Activated naive CD4-positive, alpha-beta T cell treated with anti-CD3 and anti-CD28 coated beads, Interleukin-2, amount 10 ng/mL, durations not matched to agents 7 days and 5 days (primary cell): ENCODE measurements at regions of chr4 and their contacts with region 1.

Region 1: DNA sequence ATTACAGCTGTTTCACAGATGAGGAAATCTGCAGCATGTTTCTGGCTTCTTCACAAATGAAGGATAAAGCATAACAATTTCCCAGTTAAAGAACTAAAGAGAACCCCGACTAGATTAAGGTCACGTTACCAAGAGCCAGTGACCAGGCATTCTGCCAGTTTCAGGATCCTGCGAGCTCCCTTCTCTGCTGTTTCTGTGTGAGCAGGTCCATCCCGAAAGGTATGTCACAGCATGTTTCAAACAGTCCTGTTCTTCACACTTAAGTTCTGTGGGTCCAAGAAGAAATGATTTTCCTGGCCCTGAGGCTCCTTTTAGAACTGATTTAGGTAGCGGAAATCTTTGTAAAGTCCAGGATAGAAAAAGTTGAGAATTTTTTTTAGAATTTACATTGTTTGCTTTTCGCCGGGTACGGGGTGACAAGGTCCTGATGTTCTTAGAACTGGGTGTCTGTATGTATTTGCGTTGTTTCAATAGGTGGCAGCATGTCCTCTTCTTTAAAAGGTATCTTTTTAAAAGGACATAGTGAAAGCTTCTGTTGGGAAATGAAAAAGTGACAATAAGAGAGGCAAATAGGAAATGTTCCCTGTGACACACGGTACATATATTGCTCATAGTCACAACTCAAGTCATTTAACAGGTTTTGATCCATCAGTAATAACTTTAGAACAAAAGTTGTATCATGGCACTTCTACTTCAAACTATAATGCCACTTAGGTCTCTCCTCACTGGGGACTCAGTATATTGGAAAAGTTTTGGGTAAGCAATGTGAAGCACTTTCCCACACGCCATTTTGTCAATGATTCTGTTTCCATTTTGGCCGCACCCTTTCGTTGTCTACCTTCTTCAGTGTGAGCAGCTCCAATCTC is 18.4 kb downstream of the IL21 start:
- DNase-seq: no peak
- H3K4me3 Mint-ChIP-seq: no peak overlapping the region
- H3K27ac Mint-ChIP-seq: no peak overlapping the region
- H3K4me1 Mint-ChIP-seq: peaks cover 12% of the 10 kb centered on the region
- H3K27me3 Mint-ChIP-seq: no peaks in the 10 kb centered on the region

Region 2: DNA sequence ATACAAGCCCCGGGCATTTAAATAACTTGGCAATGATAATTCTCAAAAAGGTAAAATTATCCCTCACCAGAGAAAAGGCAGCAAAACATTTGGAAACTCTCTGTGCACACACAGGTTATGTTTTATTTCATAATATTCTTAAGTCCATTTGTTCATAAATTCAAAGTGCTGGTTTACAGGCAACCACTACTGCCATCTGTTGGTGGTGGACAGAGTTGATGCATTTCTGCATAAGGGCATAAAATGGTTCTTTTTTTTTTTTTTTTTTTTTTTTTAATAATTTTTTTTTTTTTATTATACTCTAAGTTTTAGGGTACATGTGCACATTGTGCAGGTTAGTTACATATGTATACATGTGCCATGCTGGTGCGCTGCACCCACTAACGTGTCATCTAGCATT is 49.9 kb after region 1 on chr4:
- CTCF ChIA-PET with region 1: interaction called, 25 read pairs
- DNase-seq: peak; percentile 66
- H3K4me3 Mint-ChIP-seq: no peak overlapping the region
- H3K27ac Mint-ChIP-seq: no peak overlapping the region
- H3K4me1 Mint-ChIP-seq: peaks cover 4% of the 10 kb centered on the region
- H3K27me3 Mint-ChIP-seq: no peaks in the 10 kb centered on the region

Region 3: DNA sequence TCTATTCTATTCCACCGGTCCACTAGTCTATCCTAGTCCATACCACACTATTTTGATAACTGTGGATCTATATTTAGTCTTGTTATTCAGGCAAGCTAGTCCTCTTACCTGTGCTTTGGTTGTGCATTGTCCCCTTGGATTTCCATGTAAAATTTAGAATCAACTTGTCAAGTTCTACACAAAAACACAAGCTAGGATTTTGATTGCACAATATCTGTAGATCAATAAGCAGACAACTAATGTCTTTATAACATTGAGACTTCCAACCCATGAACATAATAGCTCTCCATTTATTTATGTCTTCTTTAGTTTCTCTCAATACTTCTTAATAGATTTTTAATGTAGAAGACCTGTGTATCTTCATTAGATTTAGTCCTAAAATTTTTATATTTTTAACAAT is 119.7 kb after region 1 on chr4:
- CTCF ChIA-PET with region 1: interaction called, 92 read pairs
- DNase-seq: no peak
- H3K4me3 Mint-ChIP-seq: no peak overlapping the region
- H3K27ac Mint-ChIP-seq: no peak overlapping the region
- H3K4me1 Mint-ChIP-seq: no peaks in the 10 kb centered on the region
- H3K27me3 Mint-ChIP-seq: peaks cover 17% of the 10 kb centered on the region

Region 4: DNA sequence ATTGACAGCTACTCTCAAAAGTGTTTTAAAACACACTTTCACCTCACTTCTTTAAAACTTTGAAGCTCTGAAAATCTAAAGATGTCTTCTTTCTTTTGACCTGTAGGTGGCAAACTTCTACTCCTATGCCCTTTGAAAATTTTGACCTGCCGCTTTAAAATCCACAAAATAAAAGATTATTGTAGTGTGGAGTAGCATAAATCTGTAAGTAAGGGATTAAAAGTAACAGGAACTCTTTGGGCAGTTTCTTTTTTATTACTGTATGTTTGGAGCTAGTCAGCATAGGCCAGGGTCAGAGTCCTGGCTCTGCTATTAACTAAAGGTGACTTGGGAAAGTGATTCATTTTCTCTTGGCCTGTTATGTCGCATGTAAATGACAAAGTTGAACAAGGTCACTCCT is 155.5 kb after region 1 on chr4:
- CTCF ChIA-PET with region 1: interaction called, 24 read pairs
- DNase-seq: no peak
- H3K4me3 Mint-ChIP-seq: no peak overlapping the region
- H3K27ac Mint-ChIP-seq: no peak overlapping the region
- H3K4me1 Mint-ChIP-seq: peaks cover 21% of the 10 kb centered on the region
- H3K27me3 Mint-ChIP-seq: peaks cover 13% of the 10 kb centered on the region

Region 5: GRCh38 chr4:122906859-122907305 is 304.4 kb after region 1 on chr4:
- CTCF ChIA-PET with region 1: no interaction called
- DNase-seq: no peak
- H3K4me3 Mint-ChIP-seq: no peak overlapping the region
- H3K27ac Mint-ChIP-seq: no peak overlapping the region
- H3K4me1 Mint-ChIP-seq: no peaks in the 10 kb centered on the region
- H3K27me3 Mint-ChIP-seq: no peaks in the 10 kb centered on the region